Sigmoid colon (tissue), 7 donors: ENCODE measurements at regions of chr7 and their contacts with region 1.

Region 1: GRCh38 chr7:21945454-21946227 is at the start of gene CDCA7L:
- DNase-seq: peak; percentile 87
- H3K4me3 ChIP-seq: peak within 1 kb of the TSS; percentile 46 to 76 (median 70)
- H3K27ac ChIP-seq: peak within 1 kb of the TSS; percentile 75 to 91 (median 84)
- H3K4me1 ChIP-seq: peaks cover 0 to 53% (median 40%) of the 10 kb centered on the region in 4 donors
- H3K27me3 ChIP-seq: no peaks in the 10 kb centered on the region
- CTCF ChIP-seq: no peak
- EP300 ChIP-seq: no peak
- POLR2A ChIP-seq: peak in 1 of 2 donors; percentile 25
- total RNA-seq, gene CDCA7L: 19.4 to 55.9 (median 29.1) TPM

Region 2: DNA sequence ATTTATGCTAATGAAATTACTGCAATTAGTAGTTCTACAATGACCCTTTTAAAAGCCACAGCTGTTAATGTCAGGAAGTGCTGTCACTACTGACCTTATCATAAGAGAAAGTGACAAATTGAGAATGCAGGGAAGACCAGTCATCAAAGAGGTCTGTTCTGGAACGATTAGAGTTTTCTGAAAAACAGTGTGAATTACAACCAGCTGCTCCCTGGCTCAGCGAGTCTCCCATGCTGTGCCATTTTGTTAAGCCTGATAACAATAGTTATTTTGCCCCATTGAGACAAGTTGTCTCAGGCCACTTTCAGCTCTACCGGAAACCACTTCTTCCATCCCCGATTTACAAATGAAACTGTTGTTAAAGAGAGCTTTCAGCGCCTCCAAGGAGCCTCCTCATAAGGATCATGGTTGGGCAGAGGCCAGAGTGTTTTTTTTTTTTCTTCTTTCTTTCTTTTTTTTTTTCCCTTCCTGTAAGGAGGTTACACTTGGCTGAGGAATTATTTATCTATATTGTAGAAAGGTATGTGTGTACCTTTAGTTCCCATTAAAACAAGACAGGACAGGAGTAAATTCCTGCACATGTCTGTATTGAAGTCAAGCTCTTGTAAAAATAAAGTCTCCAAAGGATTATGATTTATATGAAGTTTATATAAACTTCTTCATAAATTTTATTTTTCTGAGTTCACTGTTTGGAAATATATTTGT is 173.6 kb before region 1 on chr7:
- intact Hi-C with region 1: loop called (anchors 5 kb)
- DNase-seq: no peak
- H3K4me3 ChIP-seq: peak overlapping the region in 1 of 4 donors; percentile 0
- H3K27ac ChIP-seq: peak overlapping the region in 3 of 4 donors; percentile 10 to 36 (median 16)
- H3K4me1 ChIP-seq: peaks cover 0 to 35% (median 29%) of the 10 kb centered on the region in 4 donors
- H3K27me3 ChIP-seq: no peaks in the 10 kb centered on the region
- CTCF ChIP-seq: no peak
- EP300 ChIP-seq: no peak
- POLR2A ChIP-seq: no peak

Region 3: GRCh38 chr7:21984042-21984441 is 38.4 kb after region 1 on chr7:
- intact Hi-C with region 1: no loop called
- DNase-seq: no peak
- H3K4me3 ChIP-seq: no peak overlapping the region
- H3K27ac ChIP-seq: no peak overlapping the region
- H3K4me1 ChIP-seq: no peaks in the 10 kb centered on the region
- H3K27me3 ChIP-seq: no peaks in the 10 kb centered on the region
- CTCF ChIP-seq: no peak
- EP300 ChIP-seq: no peak
- POLR2A ChIP-seq: no peak

Region 4: DNA sequence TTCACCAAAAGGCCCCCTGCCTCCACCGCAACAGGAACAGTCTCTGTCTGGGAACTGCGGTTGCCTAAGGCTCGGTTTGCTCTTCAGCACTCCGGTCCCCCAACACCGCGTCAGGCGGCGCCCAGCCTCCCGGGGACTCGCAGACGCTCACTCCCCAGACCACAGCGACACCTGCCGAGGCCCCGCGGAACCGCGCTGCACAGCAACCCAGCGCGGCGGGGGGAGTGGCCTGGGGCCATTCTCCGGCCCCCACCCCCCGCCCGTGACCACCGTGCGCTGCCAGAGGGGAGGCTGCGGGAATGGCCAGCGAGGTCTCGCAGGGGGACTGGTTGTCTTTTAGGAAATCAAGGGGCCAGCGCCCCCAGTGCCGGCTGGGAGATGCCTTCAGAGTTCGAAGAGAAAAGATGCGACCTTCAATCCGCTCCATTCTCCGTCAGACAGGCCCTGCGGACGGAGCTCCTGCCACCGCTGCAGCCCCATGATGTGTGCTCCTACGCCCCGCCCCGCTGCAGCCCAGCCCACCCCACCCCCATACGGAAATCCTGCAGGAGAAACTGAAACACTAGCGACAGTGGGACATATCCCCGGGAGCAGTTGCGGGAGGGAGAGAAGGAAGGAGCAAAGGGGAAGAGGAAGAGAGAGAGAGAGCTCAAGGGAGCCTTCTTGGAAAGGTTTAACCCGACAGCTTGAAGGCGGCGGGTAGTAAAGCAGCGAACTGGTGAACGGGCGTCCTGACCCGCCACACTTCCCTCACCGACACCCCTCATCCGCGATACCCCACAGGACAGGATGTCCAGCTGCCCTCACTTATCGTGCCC is 137.5 kb after region 1 on chr7:
- intact Hi-C with region 1: loop called (anchors 5 kb)
- DNase-seq: peak; percentile 94
- H3K4me3 ChIP-seq: peak overlapping the region; percentile 52 to 73 (median 60)
- H3K27ac ChIP-seq: peak overlapping the region; percentile 79 to 88 (median 84)
- H3K4me1 ChIP-seq: peaks cover 0 to 14% (median 6%) of the 10 kb centered on the region in 4 donors
- H3K27me3 ChIP-seq: peaks cover 0 to 13% (median 0%) of the 10 kb centered on the region in 3 donors
- CTCF ChIP-seq: peak; percentile 81 to 96 (median 90)
- EP300 ChIP-seq: peak in 1 of 4 donors; percentile 35
- POLR2A ChIP-seq: no peak